Adrenal gland (tissue), 19 donors: ENCODE measurements at regions of chr10 and their contacts with region 1.

Region 1: GRCh38 chr10:76558586-76558985 is 1079.0 kb downstream of the KCNMA1 start:
- DNase-seq: peak; percentile 70 to 85 (median 76)
- H3K4me3 ChIP-seq: no peak overlapping the region
- H3K27ac ChIP-seq: peak overlapping the region in 2 of 5 donors; percentile 41 to 45
- H3K4me1 ChIP-seq: peaks cover 23 to 25% of the 10 kb centered on the region in 2 donors
- H3K27me3 ChIP-seq: no peaks in the 10 kb centered on the region
- CTCF ChIP-seq: no peak
- POLR2A ChIP-seq: no peak

Region 2: GRCh38 chr10:76311752-76312636 is 246.6 kb before region 1 on chr10:
- intact Hi-C with region 1: loop called in 1 of 2 experiments (anchors 10 kb)
- DNase-seq: peak in 5 of 7 donors; percentile 38 to 72 (median 49)
- H3K4me3 ChIP-seq: no peak overlapping the region
- H3K27ac ChIP-seq: no peak overlapping the region
- H3K4me1 ChIP-seq: peaks cover 24 to 36% of the 10 kb centered on the region in 2 donors
- H3K27me3 ChIP-seq: no peaks in the 10 kb centered on the region
- CTCF ChIP-seq: peak in 5 of 6 experiments; percentile 29 to 52 (median 41)
- POLR2A ChIP-seq: no peak